Mucosa of descending colon (tissue), 3 donors: ENCODE measurements at regions of chr1 and their contacts with region 1.

Region 1: GRCh38 chr1:33634806-33635205 is 162.4 kb downstream of the ZSCAN20 start:
- DNase-seq: peak in 2 of 3 donors; percentile 39 to 49
- ATAC-seq: peak; percentile 57
- H3K4me3 ChIP-seq: no peak overlapping the region
- H3K4me1 ChIP-seq: no peaks in the 10 kb centered on the region
- CTCF ChIP-seq: peak; percentile 25

Region 2: DNA sequence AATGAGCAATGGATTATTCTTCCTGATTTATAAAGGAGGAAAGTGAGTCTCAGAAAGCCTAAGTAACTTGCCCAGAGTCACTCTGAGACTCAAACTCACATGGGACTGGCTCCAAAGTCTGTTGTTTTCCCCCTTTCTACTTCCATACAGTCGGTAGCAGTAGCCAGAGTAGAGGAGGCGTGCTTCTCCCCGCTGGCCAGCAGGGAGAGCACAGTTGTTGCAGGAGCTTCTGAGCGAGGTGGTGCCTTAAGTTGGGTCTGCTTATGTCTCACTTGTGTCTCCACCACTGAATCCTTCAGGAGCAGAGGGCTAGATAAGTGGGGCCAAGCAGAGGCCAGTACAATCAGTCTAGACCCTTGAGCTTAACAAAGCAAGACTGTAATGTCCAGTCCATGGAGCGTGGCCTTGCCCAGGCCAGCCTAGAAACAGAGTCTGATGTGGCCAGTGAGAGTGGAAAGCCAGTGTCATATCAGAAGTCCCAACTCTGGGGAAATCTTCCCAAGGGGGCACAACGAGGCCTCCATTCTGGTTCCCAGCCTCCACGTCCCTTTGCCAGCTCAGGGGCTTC is 19.5 kb after region 1 on chr1:
- intact Hi-C with region 1: no loop called
- DNase-seq: no peak
- ATAC-seq: peak; percentile 22
- H3K4me3 ChIP-seq: no peak overlapping the region
- H3K4me1 ChIP-seq: no peaks in the 10 kb centered on the region
- CTCF ChIP-seq: no peak

Region 3: DNA sequence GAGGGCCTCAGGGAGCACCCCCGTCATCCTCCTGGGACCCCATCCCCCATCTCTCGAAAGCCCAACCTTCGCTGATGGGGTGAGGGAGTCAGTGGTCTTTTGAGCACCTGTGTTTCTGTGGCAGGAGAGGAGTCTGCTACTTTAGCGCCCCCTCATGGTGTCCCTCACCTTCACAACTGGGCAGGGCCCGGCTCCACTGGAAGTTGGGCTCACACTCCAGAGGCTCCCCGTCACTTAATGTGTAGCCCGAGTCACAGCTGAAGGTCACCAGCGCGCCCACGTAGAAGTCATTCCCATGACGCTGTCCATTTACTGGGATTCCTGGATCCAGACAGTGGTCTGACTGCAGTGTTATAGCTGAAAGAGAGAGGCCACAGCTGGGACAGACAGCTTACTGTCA is 89.5 kb after region 1 on chr1:
- intact Hi-C with region 1: no loop called
- DNase-seq: no peak
- ATAC-seq: no peak
- H3K4me3 ChIP-seq: no peak overlapping the region
- H3K4me1 ChIP-seq: no peaks in the 10 kb centered on the region
- CTCF ChIP-seq: no peak

Region 4: GRCh38 chr1:34749992-34750391 is 1115.2 kb after region 1 on chr1:
- intact Hi-C with region 1: loop called in 1 of 2 experiments (anchors 5 kb)
- DNase-seq: no peak
- ATAC-seq: no peak
- H3K4me3 ChIP-seq: no peak overlapping the region
- H3K4me1 ChIP-seq: no peaks in the 10 kb centered on the region
- CTCF ChIP-seq: no peak